Activated CD4-positive, alpha-beta T cell treated with anti-CD3 and anti-CD28 coated beads, Interleukin-2, amount 10 ng/mL, durations not matched to agents 24 days and 14 days (primary cell): ENCODE measurements at regions of chr7 and their contacts with region 1.

Region 1: GRCh38 chr7:21939136-21939857 is 6.4 kb downstream of the CDCA7L start:
- DNase-seq: peak; percentile 79
- H3K4me3 Mint-ChIP-seq: peak overlapping the region; percentile 72
- H3K27ac Mint-ChIP-seq: peak overlapping the region; percentile 95
- H3K4me1 Mint-ChIP-seq: peaks cover 66% of the 10 kb centered on the region
- H3K27me3 Mint-ChIP-seq: no peaks in the 10 kb centered on the region

Region 2: DNA sequence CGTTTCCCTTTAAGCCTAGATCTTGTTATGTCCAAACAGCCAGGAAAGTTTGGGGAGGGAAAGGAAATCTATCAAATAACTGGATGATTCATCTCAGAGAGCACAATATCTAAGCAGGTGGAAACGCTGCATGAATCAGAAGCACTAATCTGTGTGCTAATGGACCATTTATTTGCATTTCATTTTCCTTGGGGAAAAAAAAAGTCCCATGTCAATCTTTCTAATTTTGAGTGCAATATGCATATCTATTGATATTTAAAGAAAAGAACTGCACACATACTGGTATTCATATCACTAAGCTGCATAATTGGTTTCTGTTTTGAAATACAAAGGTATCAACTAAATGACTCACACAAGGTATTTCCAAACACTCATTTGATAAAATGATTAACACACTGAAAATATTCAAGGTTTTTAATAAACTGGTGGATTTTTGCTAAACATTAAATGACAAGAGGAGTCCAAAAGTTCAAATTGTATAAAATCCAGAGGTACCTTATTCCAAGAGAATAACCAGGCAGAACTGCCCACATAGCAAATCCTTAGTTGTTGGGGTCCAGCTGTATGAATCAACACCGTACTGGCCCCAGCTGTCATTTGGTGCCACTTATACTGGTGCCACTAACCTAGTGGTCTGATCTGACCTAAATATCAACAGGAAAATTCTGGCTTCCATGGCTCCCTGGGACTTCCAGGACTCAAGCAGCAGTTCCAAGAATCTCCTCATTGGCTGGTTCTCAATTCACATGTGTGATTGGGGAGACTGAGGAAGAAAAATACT is 633.7 kb before region 1 on chr7:
- intact Hi-C with region 1: loop called (anchors 1 kb)
- DNase-seq: no peak
- H3K4me3 Mint-ChIP-seq: no peak overlapping the region
- H3K27ac Mint-ChIP-seq: peak overlapping the region; percentile 43
- H3K4me1 Mint-ChIP-seq: peaks cover 15% of the 10 kb centered on the region
- H3K27me3 Mint-ChIP-seq: no peaks in the 10 kb centered on the region

Region 3: DNA sequence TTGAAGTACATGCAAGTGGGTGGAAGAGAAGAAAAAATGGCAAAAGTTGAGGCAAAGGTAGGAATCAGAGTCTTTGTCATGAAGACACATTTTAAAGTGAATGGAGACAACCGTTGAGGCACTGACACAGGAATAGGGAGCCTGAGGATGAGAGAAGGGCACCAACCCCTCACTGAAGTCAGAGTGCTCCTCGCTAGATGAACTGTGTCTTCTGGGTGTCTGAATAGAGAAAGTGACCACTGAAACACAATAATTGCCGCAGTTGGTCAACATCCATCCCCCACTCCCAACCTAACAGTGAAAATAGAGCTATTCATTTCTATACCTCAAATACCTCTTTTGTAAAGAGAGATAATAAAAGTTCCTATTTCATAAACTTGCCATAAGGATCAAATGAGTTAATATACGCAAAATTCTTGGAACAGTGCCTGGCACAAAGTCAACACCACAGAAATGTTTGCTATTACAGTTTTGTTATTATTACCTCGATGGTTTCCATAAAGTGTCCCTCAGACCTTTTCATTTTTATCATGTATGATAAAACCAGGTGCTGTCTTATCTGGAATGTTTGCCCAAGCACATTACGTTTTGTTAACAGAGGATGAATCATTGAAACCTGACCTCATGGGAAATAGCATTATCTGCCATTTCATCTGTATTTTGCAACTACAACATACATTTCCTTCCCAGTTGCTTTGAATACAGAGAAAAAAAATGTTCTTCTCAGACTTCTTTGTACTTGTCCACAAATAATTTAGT is 573.3 kb before region 1 on chr7:
- intact Hi-C with region 1: loop called (anchors 2 kb)
- DNase-seq: peak; percentile 54
- H3K4me3 Mint-ChIP-seq: peak overlapping the region; percentile 41
- H3K27ac Mint-ChIP-seq: peak overlapping the region; percentile 57
- H3K4me1 Mint-ChIP-seq: peaks cover 56% of the 10 kb centered on the region
- H3K27me3 Mint-ChIP-seq: no peaks in the 10 kb centered on the region

Region 4: GRCh38 chr7:21898265-21898930 is 40.9 kb before region 1 on chr7:
- intact Hi-C with region 1: loop called (anchors 2 kb)
- DNase-seq: peak; percentile 74
- H3K4me3 Mint-ChIP-seq: peak overlapping the region; percentile 77
- H3K27ac Mint-ChIP-seq: peak overlapping the region; percentile 91
- H3K4me1 Mint-ChIP-seq: peaks cover 20% of the 10 kb centered on the region
- H3K27me3 Mint-ChIP-seq: no peaks in the 10 kb centered on the region

Region 5: DNA sequence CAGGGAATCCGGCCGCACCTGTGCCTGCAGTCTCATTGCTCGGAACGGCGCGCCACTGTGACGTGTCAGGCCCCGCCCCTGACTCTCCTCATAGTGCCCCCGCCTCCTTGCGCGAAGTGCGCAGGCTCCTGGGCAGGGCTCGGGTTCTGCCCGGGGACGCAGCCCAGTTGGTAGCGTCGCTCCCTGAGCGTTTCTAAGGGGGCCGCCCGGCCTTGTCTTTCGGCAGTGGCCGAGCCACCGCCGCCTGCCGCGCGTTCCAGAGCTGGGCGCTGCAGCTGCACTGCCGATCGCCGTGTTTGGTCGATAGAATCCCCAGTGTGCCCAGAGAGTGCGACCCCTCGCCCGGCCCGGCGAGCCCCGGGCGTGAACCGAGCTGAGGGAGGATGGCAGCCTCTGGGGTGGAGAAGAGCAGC is 1166.4 kb after region 1 on chr7 and contains the start of gene KLHL7:
- intact Hi-C with region 1: loop called (anchors 5 kb)
- DNase-seq: peak; percentile 99
- H3K4me3 Mint-ChIP-seq: peak within 1 kb of the TSS; percentile 97
- H3K27ac Mint-ChIP-seq: peak within 1 kb of the TSS; percentile 94
- H3K4me1 Mint-ChIP-seq: peaks cover 17% of the 10 kb centered on the region
- H3K27me3 Mint-ChIP-seq: no peaks in the 10 kb centered on the region
- total RNA-seq, gene KLHL7: 16.1 and 20.0 TPM in 2 replicates